ENCODE measurements at regions of chr6 and their contacts with region 1.

Region 1: GRCh38 chr6:34979218-34979617 is 90.2 kb downstream of the ANKS1A start:
- DNase-seq: no peak
- H3K27ac ChIP-seq: no peak overlapping the region
- CTCF ChIP-seq: no peak

Region 2: DNA sequence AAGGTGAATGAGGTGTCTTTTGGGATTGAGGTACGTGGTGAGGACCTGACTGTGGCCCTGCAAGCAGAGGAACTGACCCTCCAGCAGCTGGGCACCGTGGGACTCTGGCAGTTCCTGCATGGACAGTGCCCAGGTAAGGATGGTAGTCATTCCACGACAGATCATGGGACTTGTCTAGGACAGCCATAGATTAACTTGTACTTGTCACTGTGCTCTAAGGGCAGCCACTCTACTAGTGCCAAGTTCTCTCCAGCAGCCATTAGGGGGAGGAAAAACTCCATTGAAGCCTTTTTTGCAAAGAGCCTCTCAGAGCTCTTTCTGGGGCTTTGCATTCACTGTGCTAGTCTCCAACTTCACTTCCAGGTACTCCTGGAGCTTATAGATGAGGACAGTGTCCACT is 111.7 kb before region 1 on chr6:
- CTCF ChIA-PET with region 1: interaction called, 10 read pairs
- POLR2A ChIA-PET with region 1: no interaction called
- DNase-seq: no peak
- H3K27ac ChIP-seq: no peak overlapping the region
- CTCF ChIP-seq: no peak

Region 3: DNA sequence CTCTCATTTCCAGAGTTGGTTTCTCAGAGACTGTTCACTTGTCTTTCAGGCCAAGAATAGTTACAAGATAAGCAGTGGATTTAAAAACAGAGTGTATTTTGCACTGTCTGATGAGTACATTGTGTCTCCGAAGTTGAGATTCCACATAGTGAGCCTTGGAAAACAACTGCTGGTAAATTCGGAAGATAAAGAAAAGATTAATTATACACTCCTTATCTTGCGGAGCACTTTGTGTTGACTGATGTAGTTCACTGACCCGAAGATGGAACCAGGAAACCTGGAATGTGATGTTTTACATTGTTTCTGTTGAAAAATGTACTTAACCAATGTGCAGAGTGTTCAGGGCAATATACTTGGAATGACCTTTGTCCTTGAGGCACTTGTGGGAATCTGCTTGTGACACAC is 39.2 kb before region 1 on chr6:
- CTCF ChIA-PET with region 1: no interaction called
- POLR2A ChIA-PET with region 1: no interaction called
- DNase-seq: no peak
- H3K27ac ChIP-seq: no peak overlapping the region
- CTCF ChIP-seq: no peak

Measured in RWPE1 (cell line).